Naive thymus-derived CD4-positive, alpha-beta T cell (primary cell): ENCODE measurements at regions of chr11 and their contacts with region 1.

Region 1: GRCh38 chr11:62855571-62856332 is 16.4 kb upstream of the WDR74 start:
- DNase-seq: peak; percentile 96 to 100 (median 99)
- ATAC-seq: peak; percentile 97
- H3K4me3 ChIP-seq: peak overlapping the region; percentile 97
- H3K4me3 Mint-ChIP-seq: peak overlapping the region; percentile 93 to 100 (median 98)
- H3K27ac ChIP-seq: peak overlapping the region; percentile 85
- H3K27ac Mint-ChIP-seq: peak overlapping the region; percentile 86 to 98 (median 94)
- H3K4me1 ChIP-seq: peaks cover 33 to 39% of the 10 kb centered on the region in 2 donors
- H3K4me1 Mint-ChIP-seq: peaks cover 34 to 77% (median 46%) of the 10 kb centered on the region in 7 donors
- H3K27me3 ChIP-seq: no peaks in the 10 kb centered on the region
- H3K27me3 Mint-ChIP-seq: peaks cover 0 to 6% (median 0%) of the 10 kb centered on the region in 5 donors

Region 2: DNA sequence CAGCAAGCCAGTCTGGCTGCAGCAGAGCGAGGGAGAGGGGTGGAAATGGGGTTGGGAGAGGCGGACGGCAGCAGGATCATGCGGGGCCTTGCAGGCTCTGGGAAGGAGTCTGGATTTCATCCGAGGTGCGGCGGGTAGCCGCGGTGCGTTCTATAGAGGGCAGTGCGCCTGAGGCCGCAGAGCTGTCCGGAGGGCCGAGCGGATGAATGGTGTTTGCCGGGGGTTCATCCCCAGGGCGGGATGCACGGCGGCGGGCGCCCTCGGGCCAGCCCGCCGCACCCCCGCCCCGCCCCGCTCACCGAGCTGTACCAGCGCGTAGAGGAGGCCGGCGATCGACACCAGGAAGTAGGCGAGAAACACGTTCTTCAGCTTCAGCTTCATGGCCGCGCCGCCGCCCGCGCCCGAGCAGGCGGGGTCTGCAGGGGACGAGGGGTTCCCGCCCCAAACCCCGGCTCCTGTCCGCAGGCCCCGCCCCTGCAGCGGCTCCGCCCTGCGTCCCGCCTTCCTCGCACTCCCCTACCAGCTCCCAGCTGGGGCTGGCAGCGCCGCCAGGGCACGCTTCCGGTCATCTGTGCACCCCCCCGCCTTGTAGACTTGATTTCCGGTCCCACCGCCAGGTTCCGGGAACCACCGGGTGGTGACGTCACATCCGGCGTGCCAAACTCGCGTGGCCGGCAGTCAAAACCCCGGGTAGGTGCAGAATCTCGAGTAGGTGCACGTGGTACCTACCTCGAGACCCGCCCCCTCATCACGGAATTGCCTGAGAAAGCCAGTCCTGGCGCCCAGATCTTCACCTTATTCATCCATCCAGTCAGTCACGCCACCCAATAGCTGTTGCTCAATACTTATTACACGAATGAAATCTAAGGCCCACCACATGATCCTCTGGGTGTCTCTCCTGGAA is 233.9 kb before region 1 on chr11 and contains the start of gene B3GAT3:
- CTCF ChIA-PET with region 1: no interaction called
- POLR2A ChIA-PET with region 1: interaction called, 13 read pairs
- intact Hi-C with region 1: no loop called
- DNase-seq: peak; percentile 87 to 97 (median 94)
- ATAC-seq: peak; percentile 93
- H3K4me3 ChIP-seq: peak within 1 kb of the TSS; percentile 97
- H3K4me3 Mint-ChIP-seq: peak within 1 kb of the TSS; percentile 91 to 99 (median 94)
- H3K27ac ChIP-seq: peak within 1 kb of the TSS; percentile 92
- H3K27ac Mint-ChIP-seq: peak within 1 kb of the TSS; percentile 92 to 99 (median 96)
- H3K4me1 ChIP-seq: peaks cover 11% of the 10 kb centered on the region in 2 donors
- H3K4me1 Mint-ChIP-seq: peaks cover 13 to 29% (median 26%) of the 10 kb centered on the region in 7 donors
- H3K27me3 ChIP-seq: no peaks in the 10 kb centered on the region
- H3K27me3 Mint-ChIP-seq: no peaks in the 10 kb centered on the region
- total RNA-seq, gene B3GAT3: 55.8 to 78.1 (median 71.2) TPM

Region 3: GRCh38 chr11:62726915-62727763 is 128.6 kb before region 1 on chr11 and contains the start of gene HNRNPUL2:
- CTCF ChIA-PET with region 1: no interaction called
- POLR2A ChIA-PET with region 1: interaction called, 63 read pairs
- intact Hi-C with region 1: loop called (anchors 1 kb)
- DNase-seq: peak; percentile 96 to 100 (median 99)
- ATAC-seq: peak; percentile 89
- H3K4me3 ChIP-seq: peak within 1 kb of the TSS; percentile 87
- H3K4me3 Mint-ChIP-seq: peak within 1 kb of the TSS; percentile 91 to 99 (median 96)
- H3K27ac ChIP-seq: peak within 1 kb of the TSS; percentile 92
- H3K27ac Mint-ChIP-seq: peak within 1 kb of the TSS; percentile 95 to 100 (median 98)
- H3K4me1 ChIP-seq: peaks cover 36 to 38% of the 10 kb centered on the region in 2 donors
- H3K4me1 Mint-ChIP-seq: peaks cover 23 to 65% (median 58%) of the 10 kb centered on the region in 7 donors
- H3K27me3 ChIP-seq: no peaks in the 10 kb centered on the region
- H3K27me3 Mint-ChIP-seq: peaks cover 0 to 2% (median 0%) of the 10 kb centered on the region in 5 donors
- total RNA-seq, gene HNRNPUL2: 43.4 to 77.5 (median 65.3) TPM

Region 4: DNA sequence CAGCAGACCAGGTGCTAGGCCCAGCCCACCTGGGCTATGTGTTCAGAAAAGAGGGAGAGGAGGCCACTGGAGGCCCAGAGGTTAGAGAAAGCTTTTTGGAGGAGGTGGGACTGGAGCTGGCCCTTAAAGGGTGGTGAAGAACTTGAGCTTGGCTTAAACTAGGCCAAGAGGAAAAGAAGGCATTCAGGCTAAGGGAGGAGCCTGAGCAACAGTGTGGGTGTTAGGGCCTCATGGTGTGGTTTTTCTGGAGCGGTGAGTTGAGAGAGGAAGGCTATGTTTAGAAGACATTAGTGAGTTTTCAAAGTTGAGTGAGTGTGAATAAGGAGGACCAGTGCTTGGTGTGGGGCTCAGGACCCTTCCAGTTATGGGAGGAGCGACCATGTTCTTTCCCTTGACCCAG is 78.4 kb before region 1 on chr11:
- CTCF ChIA-PET with region 1: interaction called, 4 read pairs
- POLR2A ChIA-PET with region 1: interaction called, 33 read pairs
- intact Hi-C with region 1: no loop called
- DNase-seq: no peak
- ATAC-seq: no peak
- H3K4me3 ChIP-seq: no peak overlapping the region
- H3K4me3 Mint-ChIP-seq: peak overlapping the region in 1 of 10 donors; percentile 4
- H3K27ac ChIP-seq: no peak overlapping the region
- H3K27ac Mint-ChIP-seq: peak overlapping the region in 4 of 9 donors; percentile 6 to 78 (median 38)
- H3K4me1 ChIP-seq: no peaks in the 10 kb centered on the region
- H3K4me1 Mint-ChIP-seq: peaks cover 0 to 14% (median 6%) of the 10 kb centered on the region in 7 donors
- H3K27me3 ChIP-seq: no peaks in the 10 kb centered on the region
- H3K27me3 Mint-ChIP-seq: no peaks in the 10 kb centered on the region

Region 5: GRCh38 chr11:62805076-62805892 is 50.5 kb before region 1 on chr11 and contains the start of gene NXF1:
- CTCF ChIA-PET with region 1: interaction called, 4 read pairs
- POLR2A ChIA-PET with region 1: interaction called, 39 read pairs
- intact Hi-C with region 1: loop called in 1 of 2 experiments (anchors 1 kb)
- DNase-seq: peak; percentile 91 to 99 (median 97)
- ATAC-seq: peak; percentile 92
- H3K4me3 ChIP-seq: peak within 1 kb of the TSS; percentile 87
- H3K4me3 Mint-ChIP-seq: peak within 1 kb of the TSS; percentile 90 to 100 (median 99)
- H3K27ac ChIP-seq: peak within 1 kb of the TSS; percentile 97
- H3K27ac Mint-ChIP-seq: peak within 1 kb of the TSS; percentile 95 to 100 (median 99)
- H3K4me1 ChIP-seq: peaks cover 13 to 18% of the 10 kb centered on the region in 2 donors
- H3K4me1 Mint-ChIP-seq: peaks cover 17 to 55% (median 34%) of the 10 kb centered on the region in 7 donors
- H3K27me3 ChIP-seq: no peaks in the 10 kb centered on the region
- H3K27me3 Mint-ChIP-seq: peaks cover 0 to 2% (median 0%) of the 10 kb centered on the region in 5 donors
- total RNA-seq, gene NXF1: 92.1 to 421 (median 195) TPM

Region 6: DNA sequence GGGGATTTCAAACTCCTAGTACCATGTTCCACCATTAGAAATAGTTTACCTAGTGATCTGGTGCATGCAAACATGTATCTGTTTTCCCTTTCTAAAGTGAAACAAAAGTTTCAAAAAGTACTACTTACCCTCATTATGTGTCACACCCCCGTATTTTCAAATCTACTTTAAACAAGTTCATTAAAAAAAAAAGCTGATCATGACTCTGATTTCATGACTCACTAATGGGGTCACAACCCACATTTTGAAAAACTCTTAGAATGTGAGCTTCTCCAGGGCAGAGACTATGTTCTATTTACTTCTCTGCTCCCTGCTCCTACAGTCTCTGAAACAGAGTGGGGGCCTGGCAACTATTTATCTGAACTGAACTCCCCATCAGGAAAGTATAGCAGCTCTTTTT is 47.2 kb after region 1 on chr11:
- CTCF ChIA-PET with region 1: no interaction called
- POLR2A ChIA-PET with region 1: no interaction called
- intact Hi-C with region 1: no loop called
- DNase-seq: no peak
- ATAC-seq: no peak
- H3K4me3 ChIP-seq: no peak overlapping the region
- H3K4me3 Mint-ChIP-seq: no peak overlapping the region
- H3K27ac ChIP-seq: no peak overlapping the region
- H3K27ac Mint-ChIP-seq: no peak overlapping the region
- H3K4me1 ChIP-seq: no peaks in the 10 kb centered on the region
- H3K4me1 Mint-ChIP-seq: peaks cover 0 to 18% (median 0%) of the 10 kb centered on the region in 7 donors
- H3K27me3 ChIP-seq: no peaks in the 10 kb centered on the region
- H3K27me3 Mint-ChIP-seq: peaks cover 0 to 34% (median 10%) of the 10 kb centered on the region in 5 donors

Region 7: DNA sequence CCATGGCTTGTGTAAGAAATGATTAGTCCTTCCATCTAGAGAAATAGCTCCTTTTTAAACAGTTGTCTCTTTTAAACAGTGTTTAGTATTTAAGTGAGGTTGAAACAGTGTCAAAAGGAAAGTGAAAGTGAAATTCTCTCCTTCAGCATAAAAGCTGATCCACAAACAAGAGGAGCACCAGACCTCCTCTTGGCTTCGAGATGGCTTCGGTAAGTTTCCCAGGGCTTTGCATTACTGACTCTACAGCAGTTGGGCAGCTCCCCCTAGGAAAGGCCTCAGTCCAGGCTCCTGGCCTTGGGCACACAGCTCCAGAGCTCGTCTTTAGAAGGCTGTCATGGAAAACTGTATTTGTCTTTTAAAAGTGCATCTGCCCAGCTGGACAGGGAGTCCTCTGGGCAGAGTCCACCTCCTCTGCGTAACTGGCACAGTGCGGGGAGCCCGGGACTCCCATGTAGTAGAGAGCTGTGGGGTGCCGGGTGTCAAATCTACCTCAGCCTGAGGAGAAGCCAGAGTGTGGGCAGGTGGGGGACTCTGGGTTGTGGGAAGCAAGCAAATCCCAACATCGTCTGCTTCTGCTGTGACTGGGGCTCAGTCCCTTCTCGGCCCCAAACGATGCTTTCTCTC is 681.0 kb after region 1 on chr11 and contains the start of gene PLAAT4:
- CTCF ChIA-PET with region 1: no interaction called
- POLR2A ChIA-PET with region 1: no interaction called
- intact Hi-C with region 1: no loop called
- DNase-seq: peak in 8 of 9 donors; percentile 30 to 64 (median 56)
- ATAC-seq: peak; percentile 74
- H3K4me3 ChIP-seq: peak within 1 kb of the TSS; percentile 90
- H3K4me3 Mint-ChIP-seq: peak within 1 kb of the TSS; percentile 87 to 99 (median 96)
- H3K27ac ChIP-seq: peak within 1 kb of the TSS; percentile 82
- H3K27ac Mint-ChIP-seq: peak within 1 kb of the TSS; percentile 91 to 97 (median 96)
- H3K4me1 ChIP-seq: peaks cover 79% of the 10 kb centered on the region in 2 donors
- H3K4me1 Mint-ChIP-seq: peaks cover 55 to 96% (median 87%) of the 10 kb centered on the region in 7 donors
- H3K27me3 ChIP-seq: no peaks in the 10 kb centered on the region
- H3K27me3 Mint-ChIP-seq: no peaks in the 10 kb centered on the region
- total RNA-seq, gene PLAAT4: 96.2 to 170 (median 122) TPM